Endothelial cell of umbilical vein (primary cell): ENCODE measurements at regions of chr2 and their contacts with region 1.

Region 1: DNA sequence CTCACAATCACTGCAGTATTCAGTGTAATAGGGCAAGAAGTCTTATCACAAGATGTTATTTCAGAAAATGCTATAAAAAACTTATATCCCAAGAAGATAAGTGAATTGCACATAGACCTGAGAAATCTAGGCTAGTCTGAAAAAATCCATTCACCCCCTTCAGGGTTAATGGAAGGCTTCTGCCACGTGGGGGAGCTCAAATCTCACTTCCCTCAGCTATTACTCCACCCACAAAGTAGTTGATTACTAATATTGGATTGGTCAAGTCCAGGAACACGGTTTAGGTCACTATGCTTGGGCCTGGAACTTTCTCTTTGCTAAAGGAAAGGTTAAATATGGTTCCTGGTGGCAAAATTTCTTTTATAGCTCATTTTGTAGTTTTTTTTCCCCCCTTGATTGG is 51.2 kb upstream of the ADAM23 start:
- DNase-seq: peak; percentile 81
- H3K4me3 ChIP-seq: no peak overlapping the region
- H3K27ac ChIP-seq: no peak overlapping the region
- H3K4me1 ChIP-seq: no peaks in the 10 kb centered on the region
- H3K27me3 ChIP-seq: no peaks in the 10 kb centered on the region
- CTCF ChIP-seq: peak; percentile 67 to 72
- POLR2A ChIP-seq: no peak

Region 2: GRCh38 chr2:206423149-206423548 is 31.0 kb after region 1 on chr2:
- CTCF ChIA-PET with region 1: interaction called, 9 read pairs
- POLR2A ChIA-PET with region 1: no interaction called
- dilution Hi-C with region 1: no loop called
- intact Hi-C with region 1: loop called (anchors 1 kb)
- DNase-seq: peak; percentile 62
- H3K4me3 ChIP-seq: no peak overlapping the region
- H3K27ac ChIP-seq: peak overlapping the region; percentile 25
- H3K4me1 ChIP-seq: peaks cover 32% of the 10 kb centered on the region
- H3K27me3 ChIP-seq: no peaks in the 10 kb centered on the region
- CTCF ChIP-seq: no peak
- POLR2A ChIP-seq: no peak

Region 3: GRCh38 chr2:206556357-206556949 is 164.3 kb after region 1 on chr2:
- CTCF ChIA-PET with region 1: interaction called, 44 read pairs
- POLR2A ChIA-PET with region 1: no interaction called
- dilution Hi-C with region 1: no loop called
- intact Hi-C with region 1: loop called (anchors 1 kb)
- DNase-seq: peak; percentile 72
- H3K4me3 ChIP-seq: no peak overlapping the region
- H3K27ac ChIP-seq: no peak overlapping the region
- H3K4me1 ChIP-seq: no peaks in the 10 kb centered on the region
- H3K27me3 ChIP-seq: no peaks in the 10 kb centered on the region
- CTCF ChIP-seq: peak; percentile 30 to 39
- POLR2A ChIP-seq: no peak

Region 4: DNA sequence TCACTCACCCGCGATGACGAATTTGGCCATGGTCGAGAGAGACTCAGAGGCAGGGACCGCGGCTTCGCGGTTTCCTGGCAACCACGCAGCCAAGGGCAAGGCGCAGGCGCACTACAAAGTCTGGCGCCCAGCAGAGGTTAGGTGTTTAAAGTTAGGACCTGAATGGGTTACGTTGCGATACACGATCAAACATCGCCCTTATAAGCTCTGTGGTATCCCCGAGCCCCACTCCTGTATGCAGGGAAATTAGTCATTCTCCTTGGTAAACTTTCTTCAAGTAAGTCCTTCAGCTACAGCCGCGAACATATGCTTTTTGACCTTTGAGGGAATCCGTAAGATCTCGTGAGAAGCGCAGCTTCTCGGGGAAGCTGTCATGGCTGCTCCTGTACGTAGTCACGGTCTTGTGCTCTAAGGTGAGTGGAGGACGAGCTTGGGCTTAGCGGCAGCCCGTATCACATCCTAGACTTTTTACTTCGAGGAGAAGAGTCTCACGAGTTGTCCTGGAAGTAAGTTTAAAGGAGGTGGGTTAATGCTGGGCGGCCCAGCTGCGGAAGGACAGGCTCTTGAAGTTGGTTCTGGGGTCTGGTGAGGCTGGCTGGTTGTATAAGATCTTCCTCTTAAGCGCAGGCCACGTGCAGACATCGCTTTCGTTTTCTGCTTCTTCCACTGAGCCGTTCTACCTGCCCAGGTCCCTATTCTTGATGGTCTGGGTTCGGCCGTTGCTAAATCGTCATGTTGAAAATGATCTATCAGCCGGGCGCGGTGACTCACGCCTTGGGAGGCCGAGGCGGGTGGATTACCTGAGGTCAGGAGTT is 373.3 kb after region 1 on chr2 and contains the starts of genes FASTKD2 and MDH1B:
- CTCF ChIA-PET with region 1: no interaction called
- POLR2A ChIA-PET with region 1: no interaction called
- dilution Hi-C with region 1: no loop called
- intact Hi-C with region 1: loop called (anchors 5 kb)
- DNase-seq: peak; percentile 99
- H3K4me3 ChIP-seq: peak within 1 kb of the TSS; percentile 76 to 96 (median 80)
- H3K27ac ChIP-seq: peak within 1 kb of the TSS; percentile 89
- H3K4me1 ChIP-seq: peaks cover 8% of the 10 kb centered on the region
- H3K27me3 ChIP-seq: peaks cover 5 to 20% of the 10 kb centered on the region in 2 experiments
- CTCF ChIP-seq: no peak
- POLR2A ChIP-seq: peak; percentile 90
- total RNA-seq, gene FASTKD2: 22.6 and 24.1 TPM in 2 replicates
- total RNA-seq, gene MDH1B: 0.51 TPM in 1 of 2 replicates, not detected in the other